IMR-90 (cell line): ENCODE measurements at regions of chr4 and their contacts with region 1.

Region 1: DNA sequence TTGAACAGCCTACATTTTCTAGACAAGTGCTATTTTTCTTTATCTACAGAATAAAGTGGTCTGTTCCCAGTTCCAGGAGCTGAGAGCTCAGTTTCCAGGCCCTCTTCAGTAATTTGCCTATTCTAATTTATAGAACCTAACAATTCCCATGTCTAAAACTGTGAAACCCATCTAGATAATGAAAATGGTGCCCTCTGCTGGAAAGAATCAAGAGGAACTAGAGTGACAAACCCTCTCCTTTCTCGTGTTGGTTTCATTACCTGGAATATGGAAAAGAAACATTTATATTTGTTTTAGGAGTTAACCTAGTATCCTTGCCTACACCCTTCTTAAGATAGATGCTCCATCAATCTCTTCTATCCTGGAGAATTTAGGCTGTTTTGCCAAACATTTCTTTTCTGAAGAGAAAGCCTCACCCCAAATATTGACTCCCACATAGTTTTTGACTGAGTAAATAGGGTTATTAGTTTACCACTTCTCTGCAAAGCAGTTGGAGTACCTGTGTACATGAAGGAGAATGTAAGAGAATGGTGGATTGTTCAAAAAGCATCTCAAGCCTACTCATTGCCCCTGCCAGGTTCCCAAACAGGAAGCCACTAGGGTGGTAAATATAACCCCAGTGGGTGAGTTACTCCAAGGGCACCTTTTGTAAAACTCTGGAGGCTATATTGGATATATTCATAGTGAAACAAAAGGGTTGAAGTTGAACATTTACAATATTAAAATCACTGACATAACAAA is 121.6 kb downstream of the RASL11B start:
- DNase-seq: peak; percentile 68
- ATAC-seq: peak; percentile 52; the same call in 1 of the 2 replicates
- H3K4me3 ChIP-seq: no peak overlapping the region
- H3K27ac ChIP-seq: no peak overlapping the region
- H3K4me1 ChIP-seq: peaks cover 1% of the 10 kb centered on the region
- H3K27me3 ChIP-seq: no peaks in the 10 kb centered on the region
- CTCF ChIP-seq: peak; percentile 71
- POLR2A ChIP-seq: no peak
- RAD21 ChIP-seq: peak; percentile 68

Region 2: DNA sequence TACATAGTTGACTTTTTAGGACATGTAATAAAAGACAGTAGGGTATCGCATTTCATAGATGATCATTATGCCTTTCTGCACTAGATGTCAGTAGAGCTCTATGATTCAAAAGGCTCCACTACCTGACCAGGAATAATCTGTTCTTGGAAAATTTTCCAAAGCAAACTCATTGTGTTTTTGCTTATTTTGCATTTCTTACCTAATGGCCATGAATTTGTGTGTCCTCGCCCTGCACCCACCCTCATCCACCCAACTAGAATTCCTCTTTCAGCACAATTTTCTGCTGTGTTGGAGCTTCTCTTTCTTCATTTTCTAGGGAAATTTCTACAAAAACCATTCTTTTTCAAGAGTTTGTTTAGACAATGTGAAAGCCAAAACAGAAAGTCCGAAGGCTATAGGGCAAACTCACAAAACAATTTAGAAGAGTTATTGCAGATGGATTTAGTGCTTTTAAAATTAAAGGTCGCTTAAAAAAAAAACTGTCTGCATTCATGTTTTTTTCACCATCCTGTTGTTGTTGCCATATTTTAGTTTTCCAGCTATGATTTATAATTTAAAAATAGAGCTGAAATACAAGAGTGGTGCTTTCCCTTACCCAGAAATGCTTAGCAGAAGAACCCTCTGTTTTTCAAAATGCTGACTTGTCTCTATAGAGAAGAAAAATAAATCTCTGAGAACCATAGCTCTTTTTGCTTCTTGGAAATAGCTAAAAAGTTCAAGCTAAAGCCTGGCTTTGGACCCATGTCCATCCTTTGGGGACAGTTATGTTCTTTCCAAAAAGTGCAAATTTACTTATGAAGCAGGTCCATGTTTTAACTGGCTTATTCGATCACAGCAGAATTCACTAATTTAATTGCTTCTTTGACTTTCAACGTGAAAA is 748.9 kb before region 1 on chr4:
- CTCF ChIA-PET with region 1: no interaction called
- POLR2A ChIA-PET with region 1: no interaction called
- dilution Hi-C with region 1: no loop called
- in situ Hi-C with region 1: no loop called
- intact Hi-C with region 1: loop called (anchors 2 kb)
- DNase-seq: peak; percentile 37
- ATAC-seq: peak; percentile 82
- H3K4me3 ChIP-seq: no peak overlapping the region
- H3K27ac ChIP-seq: no peak overlapping the region
- H3K4me1 ChIP-seq: no peaks in the 10 kb centered on the region
- H3K27me3 ChIP-seq: no peaks in the 10 kb centered on the region; the same call in 1 of the 2 replicates
- CTCF ChIP-seq: peak; percentile 56
- POLR2A ChIP-seq: no peak
- RAD21 ChIP-seq: peak; percentile 56

Region 3: GRCh38 chr4:52545099-52546069 is 438.3 kb before region 1 on chr4:
- CTCF ChIA-PET with region 1: interaction called, 16 read pairs
- POLR2A ChIA-PET with region 1: no interaction called
- dilution Hi-C with region 1: no loop called
- in situ Hi-C with region 1: loop called (anchors 5 kb)
- intact Hi-C with region 1: loop called (anchors 2 kb)
- DNase-seq: peak; percentile 65
- ATAC-seq: peak; percentile 95
- H3K4me3 ChIP-seq: no peak overlapping the region
- H3K27ac ChIP-seq: no peak overlapping the region
- H3K4me1 ChIP-seq: no peaks in the 10 kb centered on the region
- H3K27me3 ChIP-seq: no peaks in the 10 kb centered on the region
- CTCF ChIP-seq: peak; percentile 98
- POLR2A ChIP-seq: peak; percentile 53; the same call in 1 of the 2 replicates
- RAD21 ChIP-seq: peak; percentile 99

Region 4: GRCh38 chr4:52659001-52659721 is 324.6 kb before region 1 on chr4 and contains the start of gene USP46:
- CTCF ChIA-PET with region 1: no interaction called
- POLR2A ChIA-PET with region 1: no interaction called
- dilution Hi-C with region 1: no loop called
- in situ Hi-C with region 1: no loop called
- intact Hi-C with region 1: loop called (anchors 2 kb)
- DNase-seq: peak; percentile 69
- ATAC-seq: peak; percentile 92
- H3K4me3 ChIP-seq: peak within 1 kb of the TSS; percentile 99
- H3K27ac ChIP-seq: peak within 1 kb of the TSS; percentile 99
- H3K4me1 ChIP-seq: peaks cover 4% of the 10 kb centered on the region
- H3K27me3 ChIP-seq: no peaks in the 10 kb centered on the region
- CTCF ChIP-seq: no peak
- POLR2A ChIP-seq: no peak
- RAD21 ChIP-seq: no peak
- total RNA-seq, gene USP46: 15.4 and 20.3 TPM in 2 replicates

Region 5: GRCh38 chr4:52721968-52722815 is 261.5 kb before region 1 on chr4:
- CTCF ChIA-PET with region 1: interaction called, 6 read pairs
- POLR2A ChIA-PET with region 1: no interaction called
- dilution Hi-C with region 1: no loop called
- in situ Hi-C with region 1: loop called (anchors 10 kb)
- intact Hi-C with region 1: no loop called
- DNase-seq: peak; percentile 97
- ATAC-seq: peak; percentile 97
- H3K4me3 ChIP-seq: peak overlapping the region; percentile 79
- H3K27ac ChIP-seq: peak overlapping the region; percentile 98
- H3K4me1 ChIP-seq: no peaks in the 10 kb centered on the region
- H3K27me3 ChIP-seq: no peaks in the 10 kb centered on the region
- CTCF ChIP-seq: no peak
- POLR2A ChIP-seq: peak; percentile 65; the same call in 1 of the 2 replicates
- RAD21 ChIP-seq: no peak